AG04449 (cell line): ENCODE measurements at regions of chr17 and their contacts with region 1.

Region 1: DNA sequence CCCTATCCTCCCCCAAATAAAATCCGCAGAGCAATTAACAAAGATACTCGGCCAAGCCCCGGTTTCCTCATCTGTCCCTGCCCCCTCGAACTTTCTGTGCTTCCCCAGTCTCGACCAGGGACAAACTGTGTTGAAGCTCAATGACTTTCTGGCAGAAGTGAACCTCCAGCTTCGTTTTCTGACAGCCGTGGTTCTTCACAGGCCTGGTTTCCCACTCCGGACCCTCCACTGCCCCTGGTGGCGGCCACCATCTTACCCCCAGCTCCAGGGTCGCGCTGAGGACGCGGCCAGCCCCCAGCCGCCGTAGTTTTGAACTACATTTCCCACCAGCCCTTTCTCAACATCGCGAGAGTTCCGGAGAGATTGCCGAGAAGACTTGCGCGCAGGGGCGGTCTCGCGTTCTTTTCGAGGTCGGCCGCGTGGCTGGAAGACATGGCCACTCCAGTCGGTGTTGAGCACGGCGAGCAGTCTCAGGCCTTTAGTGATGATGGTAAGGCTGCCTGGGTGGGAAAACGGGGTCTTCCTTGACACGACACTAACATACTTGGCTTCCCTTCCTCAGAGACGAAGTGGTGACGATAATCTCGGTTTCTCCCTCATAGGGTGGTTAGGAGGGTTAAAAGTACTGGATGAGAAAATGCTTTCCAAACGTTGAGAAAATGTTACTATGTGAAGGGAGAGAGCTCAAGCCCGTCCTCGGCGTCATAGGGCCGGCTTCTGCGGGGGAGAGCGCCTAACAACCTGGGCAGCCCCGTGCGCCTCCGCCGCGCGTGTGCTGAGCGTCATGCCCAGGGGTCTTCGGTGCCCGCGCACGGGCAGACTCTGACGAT is 17.7 kb downstream of the PRCD start:
- DNase-seq: peak; percentile 77
- H3K4me3 ChIP-seq: peak overlapping the region; percentile 96
- CTCF ChIP-seq: peak; percentile 86

Region 2: GRCh38 chr17:76458580-76459490 is 98.7 kb before region 1 on chr17:
- CTCF ChIA-PET with region 1: interaction called, 12 read pairs
- POLR2A ChIA-PET with region 1: no interaction called
- DNase-seq: no peak
- H3K4me3 ChIP-seq: no peak overlapping the region
- CTCF ChIP-seq: peak; percentile 87

Region 3: GRCh38 chr17:76529224-76530094 is 28.1 kb before region 1 on chr17:
- CTCF ChIA-PET with region 1: interaction called, 10 read pairs
- POLR2A ChIA-PET with region 1: interaction called, 3 read pairs
- DNase-seq: no peak
- H3K4me3 ChIP-seq: no peak overlapping the region
- CTCF ChIP-seq: no peak

Region 4: DNA sequence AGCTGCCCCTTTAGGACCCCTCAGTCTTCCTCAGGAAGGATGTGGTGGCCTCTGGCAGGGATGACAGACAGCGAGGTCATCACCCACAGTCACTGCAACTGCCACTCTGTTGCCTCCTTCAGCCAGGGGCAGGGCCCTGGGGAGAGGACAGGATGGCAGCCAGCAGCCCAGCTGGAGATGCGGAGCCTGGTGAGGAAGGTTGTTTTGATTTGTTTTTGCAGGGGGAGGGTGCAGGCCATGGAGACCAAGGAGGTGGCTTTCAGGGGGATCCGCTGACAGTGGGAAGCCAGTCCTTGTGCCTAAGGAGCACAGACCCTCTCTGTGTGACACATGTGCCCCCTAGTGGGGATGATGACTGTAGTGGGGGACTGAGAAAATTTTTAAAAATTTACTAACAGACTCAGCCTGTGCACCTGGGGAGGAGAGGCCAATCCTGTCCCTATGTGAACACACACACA is 10.4 kb before region 1 on chr17:
- CTCF ChIA-PET with region 1: interaction called, 43 read pairs
- POLR2A ChIA-PET with region 1: interaction called, 6 read pairs
- DNase-seq: no peak
- H3K4me3 ChIP-seq: no peak overlapping the region
- CTCF ChIP-seq: peak; percentile 68

Region 5: DNA sequence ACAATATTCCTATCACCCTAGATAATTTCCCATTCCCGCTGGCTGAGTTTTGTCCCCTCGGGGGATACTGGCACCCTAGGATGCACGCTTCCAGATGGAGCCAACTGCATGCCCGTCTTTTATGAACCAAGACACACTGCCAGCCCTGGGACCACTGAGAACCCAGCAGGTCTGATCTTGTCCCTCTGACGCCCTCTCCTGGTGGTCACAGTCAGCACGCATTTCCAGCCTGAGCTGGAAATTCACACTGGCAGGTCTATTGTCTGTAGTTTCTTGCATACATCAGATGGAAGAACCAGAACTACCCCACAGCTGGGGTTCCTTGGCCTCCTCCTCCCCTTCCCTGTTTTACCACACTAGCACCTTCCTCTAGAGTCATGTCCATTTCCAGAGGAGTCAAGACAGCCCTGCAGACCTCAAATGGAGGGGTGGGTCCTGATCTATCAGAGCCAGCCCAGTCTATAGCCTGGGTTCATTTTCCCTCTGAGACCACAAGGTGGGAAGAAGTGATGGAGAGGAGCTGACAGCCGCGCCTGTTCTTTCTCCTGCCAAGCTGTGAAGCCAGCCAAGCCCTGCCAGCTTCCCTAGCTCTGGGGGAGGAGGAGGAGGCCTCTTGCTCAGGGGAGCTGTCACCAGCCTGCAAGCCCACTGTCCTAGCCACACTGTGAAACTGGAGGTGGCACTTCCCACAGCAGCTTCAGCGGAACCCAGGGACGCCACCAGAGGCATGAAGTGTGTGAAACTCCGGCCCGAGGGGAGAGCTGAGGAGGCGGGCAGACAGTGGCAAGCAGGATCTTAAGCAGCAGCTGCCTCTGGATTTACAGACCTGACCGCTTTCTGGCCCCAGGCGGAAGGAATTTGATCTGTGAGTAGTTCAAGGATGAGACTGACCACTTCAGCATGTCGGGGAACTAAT is 123.9 kb after region 1 on chr17:
- CTCF ChIA-PET with region 1: interaction called, 15 read pairs
- POLR2A ChIA-PET with region 1: no interaction called
- DNase-seq: no peak
- H3K4me3 ChIP-seq: no peak overlapping the region
- CTCF ChIP-seq: peak; percentile 76

Region 6: GRCh38 chr17:76714822-76715495 is 157.4 kb after region 1 on chr17:
- CTCF ChIA-PET with region 1: interaction called, 41 read pairs
- POLR2A ChIA-PET with region 1: interaction called, 5 read pairs
- DNase-seq: no peak
- H3K4me3 ChIP-seq: no peak overlapping the region
- CTCF ChIP-seq: peak; percentile 61